Mammary epithelial cell (primary cell): ENCODE measurements at regions of chr2 and their contacts with region 1.

Region 1: GRCh38 chr2:231482806-231483391 is 18.6 kb upstream of the NCL start:
- DNase-seq: peak; percentile 24
- H3K4me3 ChIP-seq: peak overlapping the region; percentile 28 to 46 (median 44)
- H3K27ac ChIP-seq: peak overlapping the region; percentile 6
- H3K4me1 ChIP-seq: peaks cover 15% of the 10 kb centered on the region
- H3K27me3 ChIP-seq: no peaks in the 10 kb centered on the region
- CTCF ChIP-seq: peak; percentile 75 to 95

Region 2: GRCh38 chr2:231463698-231464575 is 19.0 kb before region 1 on chr2 and contains the start of gene NCL:
- CTCF ChIA-PET with region 1: interaction called, 3 read pairs
- dilution Hi-C with region 1: no loop called
- in situ Hi-C with region 1: no loop called
- intact Hi-C with region 1: loop called (anchors 2 kb)
- DNase-seq: peak; percentile 98
- H3K4me3 ChIP-seq: peak within 1 kb of the TSS; percentile 95 to 100 (median 96)
- H3K27ac ChIP-seq: peak within 1 kb of the TSS; percentile 92
- H3K4me1 ChIP-seq: peaks cover 19% of the 10 kb centered on the region
- H3K27me3 ChIP-seq: no peaks in the 10 kb centered on the region
- CTCF ChIP-seq: no peak
- total RNA-seq, gene NCL: 98.0 to 671 TPM

Region 3: DNA sequence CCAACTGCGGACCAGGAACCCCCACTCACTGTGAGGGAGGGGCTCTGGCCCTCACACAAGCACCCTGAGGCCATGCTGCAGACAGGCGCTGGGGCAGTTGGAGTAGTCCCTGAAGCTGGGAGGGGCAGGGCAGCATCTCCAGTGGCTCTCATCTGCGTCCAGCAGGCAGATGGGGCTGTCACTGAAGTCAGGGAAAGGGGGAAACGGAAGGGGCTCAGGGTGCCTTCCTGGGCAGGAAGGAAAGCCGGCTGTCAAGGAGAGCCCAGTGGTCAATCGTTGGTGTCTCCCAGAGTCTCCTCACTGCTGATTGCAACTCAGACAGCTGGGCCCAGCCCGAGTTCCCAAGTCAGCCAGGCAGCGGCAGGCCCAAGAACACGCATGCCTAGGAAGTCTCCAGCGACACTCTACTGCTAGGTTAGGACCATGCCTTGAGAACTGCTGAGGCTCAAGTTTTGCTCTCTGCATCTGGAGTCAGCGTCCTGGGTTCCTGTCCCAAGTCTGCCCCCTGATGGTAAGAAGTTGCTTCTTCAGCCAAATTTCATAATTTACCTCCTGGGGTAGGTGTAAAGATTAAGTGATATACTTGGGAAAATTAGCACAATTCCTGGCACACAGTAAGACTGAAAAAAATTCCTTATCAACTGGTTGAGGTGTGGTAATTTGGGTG is 74.8 kb after region 1 on chr2:
- CTCF ChIA-PET with region 1: no interaction called
- dilution Hi-C with region 1: no loop called
- in situ Hi-C with region 1: no loop called
- intact Hi-C with region 1: loop called (anchors 1 kb)
- DNase-seq: peak; percentile 50
- H3K4me3 ChIP-seq: no peak overlapping the region
- H3K27ac ChIP-seq: no peak overlapping the region
- H3K4me1 ChIP-seq: no peaks in the 10 kb centered on the region
- H3K27me3 ChIP-seq: no peaks in the 10 kb centered on the region
- CTCF ChIP-seq: peak; percentile 62 to 78

Region 4: GRCh38 chr2:231604685-231605606 is 122.0 kb after region 1 on chr2:
- CTCF ChIA-PET with region 1: no interaction called
- dilution Hi-C with region 1: no loop called
- in situ Hi-C with region 1: no loop called
- intact Hi-C with region 1: loop called (anchors 5 kb)
- DNase-seq: peak; percentile 94
- H3K4me3 ChIP-seq: peak overlapping the region; percentile 25 to 56 (median 46)
- H3K27ac ChIP-seq: peak overlapping the region; percentile 96
- H3K4me1 ChIP-seq: peaks cover 16% of the 10 kb centered on the region
- H3K27me3 ChIP-seq: no peaks in the 10 kb centered on the region
- CTCF ChIP-seq: no peak